GM18951 (cell line): ENCODE measurements at regions of chr22 and their contacts with region 1.

Region 1: GRCh38 chr22:43036282-43036829 is 21.4 kb upstream of the PACSIN2 start:
- POLR2A ChIP-seq: no peak

Region 2: GRCh38 chr22:42649246-42650099 is 386.9 kb before region 1 on chr22 and contains the start of gene CYB5R3:
- in situ Hi-C with region 1: loop called (anchors 25 kb)
- POLR2A ChIP-seq: peak; percentile 70

Region 3: GRCh38 chr22:42863349-42863961 is 172.9 kb before region 1 on chr22:
- in situ Hi-C with region 1: loop called (anchors 10 kb)
- POLR2A ChIP-seq: no peak

Region 4: GRCh38 chr22:43168416-43169309 is 132.3 kb after region 1 on chr22:
- in situ Hi-C with region 1: no loop called
- POLR2A ChIP-seq: no peak